ENCODE measurements at regions of chr7 and their contacts with region 1.

Region 1: GRCh38 chr7:94620703-94621118 is 35.2 kb downstream of the SGCE start:
- DNase-seq: peak; percentile 18
- ATAC-seq: peak; percentile 93
- H3K4me3 ChIP-seq: no peak overlapping the region
- H3K4me3 Mint-ChIP-seq: no peak overlapping the region
- H3K27ac ChIP-seq: no peak overlapping the region
- H3K27ac Mint-ChIP-seq: peak overlapping the region; percentile 65
- H3K4me1 ChIP-seq: peaks cover 5 to 7% of the 10 kb centered on the region in 2 donors
- H3K4me1 Mint-ChIP-seq: peaks cover 10% of the 10 kb centered on the region
- H3K27me3 ChIP-seq: no peaks in the 10 kb centered on the region
- H3K27me3 Mint-ChIP-seq: no peaks in the 10 kb centered on the region
- CTCF ChIP-seq: no peak

Region 2: GRCh38 chr7:94650162-94651051 is 29.7 kb after region 1 on chr7:
- CTCF ChIA-PET with region 1: no interaction called
- POLR2A ChIA-PET with region 1: no interaction called
- intact Hi-C with region 1: loop called (anchors 5 kb)
- DNase-seq: no peak
- ATAC-seq: no peak
- H3K4me3 ChIP-seq: no peak overlapping the region
- H3K4me3 Mint-ChIP-seq: no peak overlapping the region
- H3K27ac ChIP-seq: no peak overlapping the region
- H3K27ac Mint-ChIP-seq: no peak overlapping the region
- H3K4me1 ChIP-seq: peaks cover 10 to 11% of the 10 kb centered on the region in 2 donors
- H3K4me1 Mint-ChIP-seq: peaks cover 9% of the 10 kb centered on the region
- H3K27me3 ChIP-seq: peaks cover 0 to 28% (median 24%) of the 10 kb centered on the region in 4 experiments
- H3K27me3 Mint-ChIP-seq: peaks cover 48% of the 10 kb centered on the region
- CTCF ChIP-seq: no peak

Measured in B cell (primary cell).